Activated CD4-positive, alpha-beta T cell treated with anti-CD3 and anti-CD28 coated beads, Interleukin-2, amount 10 ng/mL, durations not matched to agents 24 days and 14 days (primary cell): ENCODE measurements at regions of chr13 and their contacts with region 1.

Region 1: DNA sequence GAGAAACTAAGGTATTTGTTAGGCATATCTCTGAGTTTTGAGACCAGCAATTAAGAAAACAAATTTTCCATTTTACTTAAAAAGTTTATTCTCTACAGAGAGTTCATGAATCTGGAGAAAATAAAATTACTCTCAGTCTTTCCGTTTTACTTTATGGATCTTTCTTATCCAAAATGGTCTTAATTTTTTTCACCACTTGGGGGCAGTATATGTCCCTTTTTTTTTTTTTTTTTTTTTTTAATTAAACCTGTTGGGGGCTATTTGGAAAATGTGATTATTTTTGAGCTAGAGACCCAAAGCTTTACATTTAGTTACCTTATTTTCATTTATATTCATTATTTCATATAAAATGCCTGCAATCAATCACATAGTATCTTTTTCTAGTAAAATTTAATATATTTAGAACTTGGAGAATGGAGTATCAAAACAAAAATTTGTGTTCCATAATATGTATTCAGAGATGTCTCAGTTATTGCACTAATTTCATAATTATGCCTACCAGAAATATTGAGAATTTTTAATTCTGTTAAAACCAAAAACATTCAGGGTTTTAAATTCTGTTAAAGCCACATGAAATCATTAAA is 27.1 kb downstream of the PIBF1 start:
- DNase-seq: no peak
- H3K4me3 Mint-ChIP-seq: no peak overlapping the region
- H3K27ac Mint-ChIP-seq: no peak overlapping the region
- H3K4me1 Mint-ChIP-seq: peaks cover 2% of the 10 kb centered on the region
- H3K27me3 Mint-ChIP-seq: no peaks in the 10 kb centered on the region

Region 2: DNA sequence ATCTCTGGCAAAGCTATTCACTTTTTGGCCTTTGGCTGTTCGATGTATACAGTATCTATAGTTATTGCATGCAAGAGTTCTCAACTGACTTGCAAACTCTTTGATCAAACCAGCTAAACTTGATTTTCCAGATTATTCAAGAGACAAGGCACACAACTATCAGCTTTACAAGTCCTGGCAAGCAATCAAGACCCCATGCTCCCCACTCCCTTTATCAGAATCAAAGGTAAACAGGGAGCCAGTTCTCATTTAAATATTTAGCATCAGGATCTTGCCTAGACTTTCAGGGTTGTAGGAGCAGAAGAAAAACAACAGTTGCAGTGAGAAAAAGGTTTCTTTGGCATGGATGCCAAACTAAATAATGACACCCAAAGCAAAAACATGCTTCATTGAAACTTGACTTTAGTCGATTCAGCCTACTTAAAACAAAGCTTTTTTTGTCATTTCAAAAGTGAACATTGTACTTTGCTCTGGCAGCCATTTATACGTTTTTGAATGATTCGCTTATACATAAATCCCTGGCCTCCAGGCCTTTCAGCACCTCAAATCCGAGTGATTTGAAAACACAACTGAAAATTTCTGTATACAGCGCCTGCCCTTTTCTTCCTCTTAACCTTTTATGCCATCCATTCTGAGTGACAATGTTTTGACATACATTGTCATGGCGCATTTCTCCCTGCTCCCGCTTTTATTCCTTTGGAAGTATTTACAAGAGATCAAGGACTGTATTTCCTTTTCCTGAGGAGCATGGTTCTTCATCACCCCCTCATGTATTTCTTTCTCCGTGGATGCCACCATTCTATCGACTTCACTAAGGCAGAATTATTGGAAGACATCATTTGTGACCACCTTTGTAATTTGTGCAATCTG is 590.6 kb after region 1 on chr13:
- intact Hi-C with region 1: loop called (anchors 5 kb)
- DNase-seq: no peak
- H3K4me3 Mint-ChIP-seq: no peak overlapping the region
- H3K27ac Mint-ChIP-seq: no peak overlapping the region
- H3K4me1 Mint-ChIP-seq: no peaks in the 10 kb centered on the region
- H3K27me3 Mint-ChIP-seq: peaks cover 2% of the 10 kb centered on the region